ENCODE measurements at regions of chr1 and their contacts with region 1.

Region 1: GRCh38 chr1:84603941-84604830 is 29.9 kb upstream of the CTBS start:
- DNase-seq: peak; percentile 61
- H3K4me3 ChIP-seq: peak overlapping the region; percentile 17 to 18
- H3K27ac ChIP-seq: peak overlapping the region; percentile 66 to 72
- H3K4me1 ChIP-seq: no peaks in the 10 kb centered on the region
- H3K27me3 ChIP-seq: no peaks in the 10 kb centered on the region
- CTCF ChIP-seq: peak in 2 of 4 experiments; percentile 50 to 53
- POLR2A ChIP-seq: no peak

Region 2: DNA sequence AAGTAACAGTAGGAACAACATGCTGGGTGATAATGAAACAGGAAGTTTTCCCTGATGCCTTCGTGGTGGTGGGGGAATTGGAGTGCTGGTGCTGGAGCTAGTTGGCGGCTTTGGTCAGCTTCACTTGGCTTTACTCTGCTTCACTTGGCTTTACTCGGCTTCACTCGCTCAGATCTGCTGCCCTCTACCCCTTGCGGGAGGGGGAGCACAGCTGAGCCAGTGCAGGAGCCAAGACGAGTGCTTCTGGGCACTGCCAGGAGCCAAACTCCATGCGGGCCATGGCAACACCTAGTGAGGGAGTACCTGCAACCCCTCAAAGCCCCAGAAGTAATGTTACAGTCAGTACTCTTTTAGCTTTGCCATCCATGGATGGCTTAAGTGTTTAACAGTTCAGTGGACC is 470.7 kb before region 1 on chr1:
- intact Hi-C with region 1: loop called (anchors 10 kb)
- DNase-seq: no peak
- H3K4me3 ChIP-seq: no peak overlapping the region
- H3K27ac ChIP-seq: no peak overlapping the region
- H3K4me1 ChIP-seq: no peaks in the 10 kb centered on the region
- H3K27me3 ChIP-seq: no peaks in the 10 kb centered on the region
- CTCF ChIP-seq: no peak
- POLR2A ChIP-seq: no peak

Region 3: GRCh38 chr1:84298328-84298683 is 305.9 kb before region 1 on chr1:
- intact Hi-C with region 1: no loop called
- DNase-seq: peak; percentile 18
- H3K4me3 ChIP-seq: peak overlapping the region; percentile 72 to 78
- H3K27ac ChIP-seq: peak overlapping the region; percentile 76 to 87
- H3K4me1 ChIP-seq: peaks cover 14% of the 10 kb centered on the region
- H3K27me3 ChIP-seq: no peaks in the 10 kb centered on the region
- CTCF ChIP-seq: no peak
- POLR2A ChIP-seq: peak; percentile 56

Region 4: GRCh38 chr1:84478876-84479868 is 125.0 kb before region 1 on chr1 and contains the start of gene RPF1:
- intact Hi-C with region 1: loop called (anchors 10 kb)
- DNase-seq: peak; percentile 61
- H3K4me3 ChIP-seq: peak within 1 kb of the TSS; percentile 65 to 76
- H3K27ac ChIP-seq: peak within 1 kb of the TSS; percentile 81 to 87
- H3K4me1 ChIP-seq: peaks cover 3% of the 10 kb centered on the region
- H3K27me3 ChIP-seq: peaks cover 3% of the 10 kb centered on the region
- CTCF ChIP-seq: no peak
- POLR2A ChIP-seq: peak; percentile 36
- total RNA-seq, gene RPF1: 38.4 TPM